ENCODE measurements at regions of chr7 and their contacts with region 1.

Region 1: DNA sequence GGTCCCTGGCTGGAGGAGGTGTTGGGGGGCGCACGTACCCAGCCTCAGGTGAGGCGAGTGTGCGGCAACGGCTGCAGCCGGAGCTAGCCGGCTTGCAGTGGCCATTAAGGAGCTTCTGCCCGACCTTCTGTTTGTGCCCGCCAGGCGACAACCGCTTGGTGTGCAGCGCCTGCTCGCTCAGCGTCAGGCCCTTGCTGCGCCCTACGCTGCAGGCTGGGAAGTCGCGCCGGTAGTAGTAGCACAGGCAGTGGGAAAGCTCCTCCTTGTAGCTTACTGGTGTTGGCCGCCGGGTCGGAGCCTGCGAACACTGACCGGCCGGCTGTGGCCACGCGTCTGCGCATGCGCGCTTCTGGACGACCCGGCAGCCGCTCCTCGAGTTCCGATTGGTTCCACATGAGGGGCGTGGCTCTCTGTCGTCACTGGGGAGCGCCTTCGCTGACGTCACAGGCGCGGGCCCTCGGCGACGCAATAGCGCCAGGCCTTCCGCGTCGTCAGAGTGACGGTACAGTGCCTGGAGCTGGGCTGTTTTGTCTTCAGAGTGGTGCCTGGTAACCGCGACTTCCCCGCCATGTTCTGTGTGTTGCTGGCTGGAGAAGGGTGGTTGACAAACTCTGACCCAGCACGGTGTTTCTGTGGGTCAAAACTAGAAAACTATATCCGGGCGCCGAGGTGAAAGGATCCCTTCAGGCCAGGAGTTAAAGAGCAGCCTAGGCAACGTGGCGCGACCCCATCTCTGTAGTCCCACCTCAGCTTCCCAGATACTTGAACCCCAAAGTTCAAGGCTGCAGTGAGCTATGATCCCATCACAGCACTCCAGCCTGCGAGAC is 76.3 kb upstream of the TMEM248 start:
- DNase-seq: peak; percentile 98 to 100 (median 99)
- ATAC-seq: peak; percentile 89 to 92
- H3K4me3 Mint-ChIP-seq: peak overlapping the region; percentile 91 to 100 (median 99)
- H3K27ac Mint-ChIP-seq: peak overlapping the region; percentile 98 to 100 (median 100)
- H3K4me1 Mint-ChIP-seq: peaks cover 10 to 34% (median 28%) of the 10 kb centered on the region in 4 donors
- H3K27me3 Mint-ChIP-seq: peaks cover 0 to 5% (median 0%) of the 10 kb centered on the region in 5 donors

Region 2: GRCh38 chr7:66740302-66740979 is 104.3 kb before region 1 on chr7 and contains the start of gene RABGEF1:
- POLR2A ChIA-PET with region 1: interaction called, 12 read pairs
- DNase-seq: peak; percentile 94 to 99 (median 97)
- ATAC-seq: peak; percentile 94 to 96
- H3K4me3 Mint-ChIP-seq: peak within 1 kb of the TSS; percentile 90 to 99 (median 94)
- H3K27ac Mint-ChIP-seq: peak within 1 kb of the TSS; percentile 90 to 99 (median 97)
- H3K4me1 Mint-ChIP-seq: peaks cover 23 to 65% (median 56%) of the 10 kb centered on the region in 4 donors
- H3K27me3 Mint-ChIP-seq: no peaks in the 10 kb centered on the region
- polyA plus RNA-seq, gene RABGEF1: 17.5 to 23.0 (median 21.6) TPM

Region 3: GRCh38 chr7:66920769-66921395 is 76.1 kb after region 1 on chr7 and contains the start of gene TMEM248:
- POLR2A ChIA-PET with region 1: interaction called, 50 read pairs
- DNase-seq: peak; percentile 83 to 96 (median 92)
- ATAC-seq: peak; percentile 87
- H3K4me3 Mint-ChIP-seq: peak within 1 kb of the TSS; percentile 86 to 100 (median 98)
- H3K27ac Mint-ChIP-seq: peak within 1 kb of the TSS; percentile 84 to 100 (median 98)
- H3K4me1 Mint-ChIP-seq: peaks cover 15 to 47% (median 41%) of the 10 kb centered on the region in 4 donors
- H3K27me3 Mint-ChIP-seq: peaks cover 0 to 3% (median 0%) of the 10 kb centered on the region in 5 donors
- polyA plus RNA-seq, gene TMEM248: 93.5 to 113 (median 103) TPM

Region 4: GRCh38 chr7:66974986-66975590 is 130.3 kb after region 1 on chr7:
- POLR2A ChIA-PET with region 1: no interaction called
- DNase-seq: no peak
- ATAC-seq: no peak
- H3K4me3 Mint-ChIP-seq: no peak overlapping the region
- H3K27ac Mint-ChIP-seq: peak overlapping the region in 1 of 10 donors; percentile 29
- H3K4me1 Mint-ChIP-seq: no peaks in the 10 kb centered on the region
- H3K27me3 Mint-ChIP-seq: peaks cover 0 to 3% (median 0%) of the 10 kb centered on the region in 5 donors